MCF 10A (cell line): ENCODE measurements at regions of chr2 and their contacts with region 1.

Region 1: GRCh38 chr2:177164584-177165052 is 48.0 kb upstream of the HNRNPA3 start:
- DNase-seq: peak; percentile 90
- H3K4me3 Mint-ChIP-seq: no peak overlapping the region
- H3K27ac Mint-ChIP-seq: no peak overlapping the region
- H3K4me1 Mint-ChIP-seq: peaks cover 17% of the 10 kb centered on the region
- H3K27me3 Mint-ChIP-seq: no peaks in the 10 kb centered on the region
- CTCF ChIP-seq: peak; percentile 97

Region 2: GRCh38 chr2:176126929-176127773 is 1037.5 kb before region 1 on chr2:
- CTCF ChIA-PET with region 1: interaction called, 13 read pairs
- POLR2A ChIA-PET with region 1: no interaction called
- intact Hi-C with region 1: loop called (anchors 5 kb)
- DNase-seq: peak; percentile 63
- H3K4me3 Mint-ChIP-seq: no peak overlapping the region
- H3K27ac Mint-ChIP-seq: no peak overlapping the region
- H3K4me1 Mint-ChIP-seq: no peaks in the 10 kb centered on the region
- H3K27me3 Mint-ChIP-seq: peaks cover 11% of the 10 kb centered on the region
- CTCF ChIP-seq: peak; percentile 76

Region 3: GRCh38 chr2:177212106-177212890 is 47.7 kb after region 1 on chr2 and contains the start of gene HNRNPA3:
- CTCF ChIA-PET with region 1: interaction called, 16 read pairs
- POLR2A ChIA-PET with region 1: interaction called, 139 read pairs
- intact Hi-C with region 1: loop called (anchors 1 kb)
- DNase-seq: peak; percentile 98
- H3K4me3 Mint-ChIP-seq: peak within 1 kb of the TSS; percentile 91
- H3K27ac Mint-ChIP-seq: peak within 1 kb of the TSS; percentile 100
- H3K4me1 Mint-ChIP-seq: peaks cover 13% of the 10 kb centered on the region
- H3K27me3 Mint-ChIP-seq: no peaks in the 10 kb centered on the region
- CTCF ChIP-seq: no peak
- total RNA-seq, gene HNRNPA3: 142 and 179 TPM in 2 replicates

Region 4: GRCh38 chr2:177263451-177264208 is 99.0 kb after region 1 on chr2:
- CTCF ChIA-PET with region 1: interaction called, 43 read pairs
- POLR2A ChIA-PET with region 1: interaction called, 198 read pairs
- intact Hi-C with region 1: loop called (anchors 1 kb)
- DNase-seq: peak; percentile 99
- H3K4me3 Mint-ChIP-seq: peak overlapping the region; percentile 89
- H3K27ac Mint-ChIP-seq: peak overlapping the region; percentile 90
- H3K4me1 Mint-ChIP-seq: peaks cover 28% of the 10 kb centered on the region
- H3K27me3 Mint-ChIP-seq: no peaks in the 10 kb centered on the region
- CTCF ChIP-seq: peak; percentile 84

Region 5: DNA sequence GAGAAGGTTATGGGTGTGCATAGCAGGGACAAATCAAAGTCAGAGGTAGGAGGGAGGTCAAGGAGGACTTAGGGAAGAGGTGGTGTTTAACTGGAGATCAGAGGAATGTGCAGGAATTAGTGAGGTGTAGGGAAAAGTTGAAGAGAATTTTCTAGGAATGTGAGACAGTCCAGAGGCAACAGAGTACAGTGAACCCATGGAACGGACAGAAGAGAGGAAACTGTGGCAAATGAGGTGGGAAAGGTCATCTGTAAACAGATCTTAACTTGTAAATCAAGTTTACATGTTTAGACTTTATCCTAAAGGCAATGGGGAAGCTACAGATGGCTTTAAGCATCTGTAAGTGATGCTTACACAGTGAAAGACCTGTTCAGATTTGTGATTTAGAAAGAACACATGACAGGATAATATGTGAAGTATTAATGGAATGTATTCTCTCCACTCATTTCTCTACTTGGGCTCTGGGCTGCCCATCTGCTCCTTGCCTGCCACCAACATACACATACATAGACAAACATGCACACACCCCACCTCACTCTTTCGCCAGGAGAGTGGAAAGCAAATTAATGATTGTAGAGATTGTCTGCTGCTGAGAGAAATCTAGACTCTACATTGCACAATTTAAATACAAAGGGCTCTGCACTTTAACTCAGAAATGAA is 160.8 kb after region 1 on chr2:
- CTCF ChIA-PET with region 1: interaction called, 14 read pairs
- POLR2A ChIA-PET with region 1: interaction called, 7 read pairs
- intact Hi-C with region 1: no loop called
- DNase-seq: no peak
- H3K4me3 Mint-ChIP-seq: no peak overlapping the region
- H3K27ac Mint-ChIP-seq: no peak overlapping the region
- H3K4me1 Mint-ChIP-seq: no peaks in the 10 kb centered on the region
- H3K27me3 Mint-ChIP-seq: no peaks in the 10 kb centered on the region
- CTCF ChIP-seq: no peak

Region 6: DNA sequence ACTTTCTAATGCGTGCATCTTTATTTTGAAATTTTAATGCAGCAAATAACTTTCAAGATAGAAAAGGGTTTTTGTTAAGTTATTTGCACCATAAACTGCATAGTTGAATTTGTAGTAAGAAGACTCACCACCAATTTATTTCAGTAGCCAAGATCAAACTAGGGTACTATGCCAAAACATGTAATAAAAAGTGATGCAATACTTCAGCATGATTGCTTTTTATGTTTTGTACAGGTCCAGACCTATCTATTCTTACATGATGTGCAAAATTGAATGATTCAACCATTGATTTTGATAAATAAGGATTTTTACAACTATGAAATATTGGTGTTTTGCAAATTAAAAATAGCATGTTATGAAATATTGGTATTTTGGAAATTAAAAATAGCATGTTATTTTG is 254.7 kb after region 1 on chr2:
- CTCF ChIA-PET with region 1: interaction called, 9 read pairs
- POLR2A ChIA-PET with region 1: interaction called, 16 read pairs
- intact Hi-C with region 1: loop called (anchors 2 kb)
- DNase-seq: peak; percentile 77
- H3K4me3 Mint-ChIP-seq: peak overlapping the region; percentile 44
- H3K27ac Mint-ChIP-seq: peak overlapping the region; percentile 49
- H3K4me1 Mint-ChIP-seq: peaks cover 7% of the 10 kb centered on the region
- H3K27me3 Mint-ChIP-seq: no peaks in the 10 kb centered on the region
- CTCF ChIP-seq: no peak